ENCODE measurements at regions of chr7 and their contacts with region 1.

Region 1: GRCh38 chr7:94907026-94907810 is at the start of gene PPP1R9A:
- DNase-seq: no peak
- H3K4me3 ChIP-seq: peak within 1 kb of the TSS; percentile 70 to 86 (median 74)
- H3K27ac ChIP-seq: peak within 1 kb of the TSS; percentile 81 to 88 (median 84)
- H3K4me1 ChIP-seq: peaks cover 15 to 39% (median 29%) of the 10 kb centered on the region in 4 donors
- H3K27me3 ChIP-seq: no peaks in the 10 kb centered on the region
- CTCF ChIP-seq: peak; percentile 18 to 44 (median 26)
- EP300 ChIP-seq: no peak
- POLR2A ChIP-seq: no peak
- total RNA-seq, gene PPP1R9A: 22.4 to 27.5 (median 23.3) TPM

Region 2: DNA sequence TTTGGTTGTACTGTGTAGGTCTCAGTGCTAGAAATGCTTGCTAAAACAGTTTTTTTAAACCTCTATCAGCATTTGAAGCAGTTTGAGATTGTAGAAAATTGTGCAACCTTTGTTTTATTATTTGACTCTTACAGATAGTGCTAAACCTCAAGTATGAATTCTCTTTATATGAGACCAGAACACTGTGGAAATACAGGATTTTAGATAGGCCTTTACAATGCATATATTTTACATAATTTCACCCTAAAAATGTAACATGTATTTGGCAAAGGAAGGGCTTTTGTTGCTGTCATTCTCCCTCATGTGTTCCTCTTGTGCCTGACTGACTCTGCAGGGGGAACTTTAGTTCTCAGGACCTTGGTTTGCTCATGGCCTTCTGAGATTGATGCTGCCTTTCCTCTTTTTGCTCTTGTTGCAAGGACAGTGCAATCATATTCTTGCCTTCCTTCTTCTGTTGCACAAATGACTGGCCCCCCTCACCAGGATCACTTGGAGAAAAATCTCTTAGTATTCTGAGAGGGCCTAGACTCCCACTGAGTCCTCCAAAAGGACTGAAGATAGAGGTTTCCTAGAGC is 188.8 kb after region 1 on chr7:
- intact Hi-C with region 1: loop called (anchors 10 kb)
- DNase-seq: no peak
- H3K4me3 ChIP-seq: no peak overlapping the region
- H3K27ac ChIP-seq: no peak overlapping the region
- H3K4me1 ChIP-seq: peaks cover 4 to 24% (median 21%) of the 10 kb centered on the region in 4 donors
- H3K27me3 ChIP-seq: no peaks in the 10 kb centered on the region
- CTCF ChIP-seq: no peak
- EP300 ChIP-seq: no peak
- POLR2A ChIP-seq: no peak

Region 3: DNA sequence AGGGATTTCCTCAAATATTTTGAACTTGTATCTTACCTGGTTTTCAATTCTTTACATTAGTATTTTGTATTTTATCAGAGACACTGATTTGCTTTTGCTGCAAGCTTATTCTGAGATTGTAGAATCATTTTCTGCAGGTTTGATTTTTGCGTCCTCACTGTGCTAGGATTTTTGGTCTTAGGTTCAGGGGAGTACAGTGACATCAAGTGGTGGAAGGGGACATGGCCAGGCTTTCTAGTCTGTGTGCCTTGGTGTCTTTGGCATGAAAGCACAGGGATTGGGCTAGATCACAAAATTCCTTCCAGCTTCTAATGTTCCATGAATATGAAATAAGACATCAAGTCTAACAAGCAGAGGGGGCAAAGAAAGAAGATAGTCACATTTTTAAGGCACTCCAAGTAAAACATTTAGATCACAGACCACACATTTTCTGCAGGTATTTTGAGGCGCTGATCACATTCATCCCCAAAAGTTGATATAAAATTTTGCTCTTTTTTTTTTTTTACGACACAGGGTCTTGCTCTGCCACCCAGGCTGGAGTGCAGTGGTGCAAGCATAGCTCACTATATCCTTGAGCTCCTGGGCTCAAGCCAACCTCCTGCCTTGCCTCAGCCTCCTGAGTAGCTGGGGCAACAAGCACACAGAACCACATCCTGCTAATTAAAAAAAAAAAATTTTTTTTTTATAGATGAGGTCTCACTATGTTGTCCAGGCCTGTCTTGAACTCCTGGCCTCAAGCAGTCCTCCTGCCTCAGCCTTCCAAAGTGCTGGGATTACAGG is 292.8 kb after region 1 on chr7:
- intact Hi-C with region 1: loop called (anchors 10 kb)
- DNase-seq: no peak
- H3K4me3 ChIP-seq: no peak overlapping the region
- H3K27ac ChIP-seq: no peak overlapping the region
- H3K4me1 ChIP-seq: no peaks in the 10 kb centered on the region
- H3K27me3 ChIP-seq: no peaks in the 10 kb centered on the region
- CTCF ChIP-seq: peak; percentile 66 to 74 (median 70)
- EP300 ChIP-seq: no peak
- POLR2A ChIP-seq: no peak